ENCODE measurements at regions of chr19 and their contacts with region 1.

Region 1: GRCh38 chr19:10717356-10718204 is at the start of gene DNM2:
- DNase-seq: peak; percentile 98 to 99
- ATAC-seq: peak; percentile 97
- H3K4me3 ChIP-seq: peak within 1 kb of the TSS; percentile 62 to 89
- H3K27ac ChIP-seq: peak within 1 kb of the TSS in 1 of 2 donors; percentile 56
- H3K4me1 ChIP-seq: no peaks in the 10 kb centered on the region
- H3K27me3 ChIP-seq: no peaks in the 10 kb centered on the region
- total RNA-seq, gene DNM2: 118 to 160 TPM

Region 2: DNA sequence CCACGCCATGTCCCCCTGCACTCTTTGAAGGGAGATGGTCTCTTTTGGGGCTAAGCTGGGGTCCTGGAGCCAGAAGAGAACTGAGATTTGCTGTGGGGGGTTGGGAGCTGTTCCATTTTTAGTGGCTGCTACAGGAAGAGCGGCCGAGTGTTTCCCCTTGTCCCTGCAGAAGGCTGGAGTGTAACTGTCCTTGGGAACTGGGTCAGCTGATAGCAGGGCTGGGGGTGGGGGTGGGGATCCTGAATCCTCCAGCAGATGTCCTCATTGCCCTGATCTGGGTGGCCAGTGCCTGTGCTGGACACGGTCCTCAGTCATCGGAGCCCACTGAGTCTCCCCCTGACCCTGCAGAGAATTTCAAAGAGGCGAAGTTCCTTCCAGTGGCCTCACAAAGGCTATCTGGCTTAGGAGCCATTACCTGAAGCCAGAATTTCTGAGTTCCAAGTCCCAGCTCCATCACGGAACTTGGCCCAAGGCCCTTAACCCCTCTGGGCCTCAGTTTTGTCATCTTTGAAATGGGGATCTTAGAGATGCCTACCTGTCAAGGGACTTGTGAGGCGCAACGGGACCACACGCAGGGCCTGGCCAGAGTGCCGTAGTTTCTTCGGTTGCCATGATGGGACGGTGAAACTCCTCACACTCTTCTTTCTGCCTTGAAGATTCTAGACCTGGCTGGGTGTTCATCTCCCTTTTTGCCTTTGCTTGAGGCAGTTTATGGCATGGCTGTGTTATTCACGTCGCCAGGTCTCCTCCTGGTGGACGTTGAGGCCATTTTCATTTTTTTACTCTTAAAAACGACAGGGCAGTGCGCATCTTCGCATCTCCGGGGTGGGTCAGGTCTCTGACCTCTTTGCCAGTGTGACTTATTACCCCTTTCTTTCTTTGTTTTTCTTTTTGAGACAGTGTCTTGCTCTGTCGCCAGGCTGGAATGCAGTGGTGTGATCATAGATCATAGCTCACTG is 52.2 kb after region 1 on chr19:
- intact Hi-C with region 1: loop called (anchors 2 to 5 kb)
- DNase-seq: no peak
- ATAC-seq: peak; percentile 58
- H3K4me3 ChIP-seq: no peak overlapping the region
- H3K27ac ChIP-seq: peak overlapping the region in 1 of 2 donors; percentile 37
- H3K4me1 ChIP-seq: no peaks in the 10 kb centered on the region
- H3K27me3 ChIP-seq: no peaks in the 10 kb centered on the region

Region 3: DNA sequence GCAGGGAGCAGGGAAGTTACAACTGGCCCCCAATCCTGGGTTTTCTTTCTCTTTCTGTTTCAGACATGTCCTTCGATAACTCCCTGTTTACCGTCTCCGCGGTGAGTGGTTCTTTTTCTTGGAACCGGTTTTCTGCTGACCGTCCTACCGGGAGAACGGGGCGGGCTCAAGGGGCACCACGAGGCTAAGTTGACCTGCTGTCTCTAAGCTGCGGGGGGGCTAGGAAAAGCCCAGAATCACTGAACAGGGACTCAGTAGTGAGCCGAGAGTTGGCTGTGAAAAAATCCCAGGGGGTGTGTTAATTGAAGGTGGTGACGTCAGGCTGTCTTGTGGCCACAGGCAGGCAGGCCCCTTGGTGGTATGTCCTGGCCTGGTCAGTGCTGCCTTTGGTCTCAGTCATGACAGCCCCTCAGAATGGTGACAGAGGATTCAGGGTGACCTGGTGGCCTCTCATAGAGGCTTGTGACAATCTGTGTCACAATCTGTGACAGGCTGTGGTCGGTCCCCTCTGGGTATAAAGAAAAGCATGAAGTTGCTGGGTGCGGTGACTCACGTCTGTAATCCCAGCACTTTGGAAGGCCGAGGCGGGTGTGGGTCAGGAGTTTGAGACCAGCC is 145.6 kb after region 1 on chr19:
- intact Hi-C with region 1: loop called in 1 of 2 experiments (anchors 2 kb)
- DNase-seq: peak in 1 of 2 donors; percentile 86
- ATAC-seq: peak; percentile 56
- H3K4me3 ChIP-seq: no peak overlapping the region
- H3K27ac ChIP-seq: peak overlapping the region in 1 of 2 donors; percentile 39
- H3K4me1 ChIP-seq: no peaks in the 10 kb centered on the region
- H3K27me3 ChIP-seq: no peaks in the 10 kb centered on the region